ENCODE measurements at regions of chr5 and their contacts with region 1.

Region 1: DNA sequence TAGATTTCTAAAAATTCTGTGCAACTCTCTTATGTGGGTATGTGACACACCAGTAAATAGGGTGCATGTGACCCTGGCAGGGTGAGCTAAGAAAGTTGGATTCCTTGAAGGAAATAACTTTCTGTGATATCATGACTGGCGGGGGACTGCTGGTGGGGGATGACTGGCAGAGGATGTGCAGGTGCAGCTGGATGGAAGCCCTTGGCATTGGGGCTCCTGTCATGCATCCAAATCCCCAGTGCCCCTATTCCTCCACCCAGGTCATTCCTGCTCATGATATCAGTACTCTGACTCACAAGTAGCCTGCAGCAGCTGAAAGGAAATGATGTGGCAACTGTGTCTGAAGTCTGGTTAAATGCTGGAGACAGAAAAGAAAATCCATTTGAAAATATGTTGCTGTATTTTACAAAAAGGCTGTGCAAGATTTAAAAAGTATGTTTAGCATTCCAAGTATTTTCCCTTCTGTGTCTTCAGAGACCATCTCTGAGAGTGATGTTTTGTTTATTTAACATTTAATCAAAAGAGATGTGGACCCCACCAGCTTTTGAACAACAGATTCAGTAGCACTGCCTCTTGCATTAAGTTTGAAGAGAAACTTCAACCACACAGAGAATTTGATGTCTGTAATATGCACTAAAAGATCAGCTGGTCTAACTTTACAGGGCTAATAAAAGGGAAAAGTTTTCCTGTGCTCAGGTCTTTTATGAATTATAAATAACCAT is 17.9 kb upstream of the ZSWIM6 start:
- DNase-seq: peak in 1 of 2 experiments; percentile 80
- ATAC-seq: peak; percentile 79 to 82
- H3K4me3 ChIP-seq: no peak overlapping the region
- H3K27ac ChIP-seq: peak overlapping the region; percentile 59 to 68
- H3K4me1 ChIP-seq: peaks cover 49% of the 10 kb centered on the region
- CTCF ChIP-seq: no peak
- EP300 ChIP-seq: peak; percentile 50 to 69; a peak in 1 of 5 replicates
- POLR2A ChIP-seq: no peak
- RAD21 ChIP-seq: 0 out of 5 replicates have a peak, but pooled peaks of 1 of the 2 experiments have one; percentile 22

Region 2: DNA sequence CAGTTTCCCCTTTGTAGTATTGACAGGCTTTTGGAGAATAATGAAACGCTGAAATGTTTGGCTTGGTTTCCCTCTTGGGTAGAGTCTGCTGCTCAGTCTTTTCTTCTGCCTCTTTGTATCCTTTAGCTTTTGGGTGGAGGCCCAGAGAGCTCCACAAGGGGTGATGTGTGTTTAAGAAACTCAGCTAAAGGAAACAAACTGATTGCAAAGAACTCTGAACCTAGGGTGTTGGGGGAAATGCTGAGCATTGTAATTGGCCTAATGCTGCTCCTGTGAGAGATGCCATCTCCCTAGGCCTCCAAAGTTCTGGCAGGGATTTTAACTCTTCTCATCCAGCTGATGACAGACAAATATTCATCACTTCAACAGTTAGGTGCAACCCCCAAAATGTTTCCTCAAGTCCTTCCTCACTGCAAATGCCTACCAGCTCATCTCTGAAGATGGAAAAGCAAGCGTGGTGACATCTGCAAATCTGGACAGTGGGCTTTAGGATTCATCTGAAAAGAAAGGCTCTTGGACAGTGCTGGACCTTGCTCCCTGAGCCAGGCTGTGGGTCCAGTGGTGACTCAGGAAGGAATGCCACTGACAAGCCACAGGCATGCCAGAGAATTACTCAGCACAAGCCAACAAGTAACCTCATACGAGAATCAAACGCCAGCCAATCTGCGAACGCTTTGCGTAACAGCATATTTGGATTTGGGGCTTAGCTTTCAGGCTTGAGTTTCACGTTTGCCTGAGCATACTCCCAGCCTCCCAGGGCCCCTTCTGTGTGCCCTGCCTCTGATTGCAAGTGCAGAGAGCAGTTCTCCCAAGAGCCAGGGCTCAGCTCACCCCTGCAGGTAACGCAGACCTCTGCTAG is 12.6 kb before region 1 on chr5:
- CTCF ChIA-PET with region 1: interaction called, 14 read pairs
- POLR2A ChIA-PET with region 1: interaction called, 12 read pairs
- DNase-seq: peak; percentile 90 to 96
- ATAC-seq: peak; percentile 84 to 87
- H3K4me3 ChIP-seq: peak overlapping the region; percentile 42
- H3K27ac ChIP-seq: peak overlapping the region; percentile 77 to 88
- H3K4me1 ChIP-seq: peaks cover 67% of the 10 kb centered on the region
- CTCF ChIP-seq: no peak
- EP300 ChIP-seq: peak; percentile 48 to 71; a peak in 2 of 5 replicates
- POLR2A ChIP-seq: no peak
- RAD21 ChIP-seq: no peak; a peak in 4 of 5 replicates